Panc1 (cell line): ENCODE measurements at regions of chr4 and their contacts with region 1.

Region 1: DNA sequence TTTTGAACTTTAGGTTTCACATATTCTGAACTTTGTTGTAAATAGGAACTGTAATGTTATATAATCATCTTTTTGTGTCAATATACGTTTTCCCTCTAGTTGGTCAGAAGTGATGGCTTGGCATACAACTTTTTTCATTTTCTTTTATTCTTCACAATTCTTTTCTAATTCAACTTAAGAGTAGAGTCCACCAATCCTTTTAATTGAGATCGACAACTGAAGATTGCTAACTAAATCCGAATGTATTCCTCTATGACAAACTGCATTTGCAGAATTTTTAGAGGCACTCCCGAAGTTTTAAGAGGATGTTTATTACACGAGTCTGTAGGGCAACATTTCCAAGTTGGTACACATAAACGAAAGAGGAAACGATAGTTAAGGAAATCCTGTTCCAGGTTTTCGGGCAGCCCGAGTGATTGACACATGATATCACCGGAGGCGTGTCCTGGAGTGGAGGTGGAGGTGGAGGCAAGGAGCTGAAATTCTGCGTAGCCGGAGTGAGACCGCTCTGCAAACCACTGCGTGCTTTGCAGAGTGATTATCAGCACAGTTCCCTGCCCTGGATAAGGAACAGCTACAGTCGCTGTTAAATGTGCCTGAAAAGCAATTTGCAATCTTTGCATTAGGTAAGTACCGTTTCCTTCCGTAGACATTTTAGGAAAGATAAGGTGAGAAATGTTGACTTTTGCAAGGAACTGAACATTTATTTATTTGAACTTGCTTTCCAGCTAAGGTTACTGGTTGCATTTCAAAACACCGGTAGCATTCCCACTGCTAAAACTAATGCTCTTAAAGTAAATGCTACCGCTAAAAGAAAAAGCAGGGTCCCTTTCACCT is at the start of gene SPRY1:
- DNase-seq: peak; percentile 87
- ATAC-seq: peak; percentile 76
- H3K4me3 ChIP-seq: peak within 1 kb of the TSS; percentile 90 to 94
- H3K27ac ChIP-seq: peak within 1 kb of the TSS; percentile 99
- H3K4me1 ChIP-seq: peaks cover 12% of the 10 kb centered on the region; the same call in 1 of the 2 replicates
- H3K27me3 ChIP-seq: no peaks in the 10 kb centered on the region
- CTCF ChIP-seq: no peak
- total RNA-seq, gene SPRY1: 77.8 TPM

Region 2: GRCh38 chr4:123073650-123074049 is 322.9 kb before region 1 on chr4:
- CTCF ChIA-PET with region 1: no interaction called
- POLR2A ChIA-PET with region 1: no interaction called
- in situ Hi-C with region 1: no loop called
- intact Hi-C with region 1: no loop called
- DNase-seq: no peak
- ATAC-seq: no peak
- H3K4me3 ChIP-seq: no peak overlapping the region
- H3K27ac ChIP-seq: no peak overlapping the region
- H3K4me1 ChIP-seq: no peaks in the 10 kb centered on the region
- H3K27me3 ChIP-seq: no peaks in the 10 kb centered on the region
- CTCF ChIP-seq: no peak

Region 3: DNA sequence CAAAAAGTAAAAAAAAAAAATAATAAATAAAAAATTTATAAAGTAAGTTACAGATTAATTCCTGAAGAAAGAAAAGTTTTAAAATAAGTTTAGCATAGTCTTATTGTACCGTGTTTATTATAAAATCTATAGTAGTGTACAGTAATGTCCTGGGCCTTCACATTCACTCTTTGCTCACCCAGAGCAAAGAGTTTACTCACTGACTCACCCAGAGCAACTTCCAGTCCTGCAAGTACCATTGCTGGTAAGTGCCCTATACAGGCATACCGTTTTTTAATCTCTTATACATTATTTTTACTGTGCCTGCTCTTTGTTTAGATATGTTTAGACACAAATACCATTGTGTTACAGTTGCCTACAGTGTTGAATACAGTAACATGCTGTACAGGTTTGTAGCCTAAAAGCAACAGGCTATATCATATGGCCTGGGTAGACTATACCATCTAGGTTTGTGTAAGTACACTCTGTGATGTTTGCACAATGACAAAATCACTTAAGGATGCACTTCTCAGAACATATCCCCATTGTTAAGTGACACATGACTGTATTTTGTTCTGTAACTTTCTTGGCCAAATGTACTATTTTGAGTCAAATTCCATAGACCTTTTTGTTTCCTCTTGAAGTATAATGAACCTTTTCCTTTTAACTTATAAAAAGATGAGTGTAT is 275.2 kb before region 1 on chr4:
- CTCF ChIA-PET with region 1: no interaction called
- POLR2A ChIA-PET with region 1: no interaction called
- in situ Hi-C with region 1: no loop called
- intact Hi-C with region 1: loop called (anchors 5 kb)
- DNase-seq: peak; percentile 85
- ATAC-seq: peak; percentile 95
- H3K4me3 ChIP-seq: no peak overlapping the region
- H3K27ac ChIP-seq: peak overlapping the region; percentile 90
- H3K4me1 ChIP-seq: peaks cover 26% of the 10 kb centered on the region
- H3K27me3 ChIP-seq: no peaks in the 10 kb centered on the region
- CTCF ChIP-seq: no peak

Region 4: GRCh38 chr4:123505095-123506010 is 108.8 kb after region 1 on chr4:
- CTCF ChIA-PET with region 1: interaction called, 4 read pairs
- POLR2A ChIA-PET with region 1: interaction called, 4 read pairs
- in situ Hi-C with region 1: no loop called
- intact Hi-C with region 1: loop called (anchors 5 kb)
- DNase-seq: no peak
- ATAC-seq: peak; percentile 66
- H3K4me3 ChIP-seq: peak overlapping the region; percentile 37 to 54
- H3K27ac ChIP-seq: peak overlapping the region; percentile 96
- H3K4me1 ChIP-seq: peaks cover 38% of the 10 kb centered on the region
- H3K27me3 ChIP-seq: no peaks in the 10 kb centered on the region
- CTCF ChIP-seq: no peak

Region 5: GRCh38 chr4:123588631-123589241 is 192.2 kb after region 1 on chr4:
- CTCF ChIA-PET with region 1: no interaction called
- POLR2A ChIA-PET with region 1: interaction called, 3 read pairs
- in situ Hi-C with region 1: no loop called
- intact Hi-C with region 1: loop called (anchors 10 kb)
- DNase-seq: no peak
- ATAC-seq: peak; percentile 89
- H3K4me3 ChIP-seq: no peak overlapping the region
- H3K27ac ChIP-seq: peak overlapping the region; percentile 99
- H3K4me1 ChIP-seq: peaks cover 20% of the 10 kb centered on the region
- H3K27me3 ChIP-seq: no peaks in the 10 kb centered on the region
- CTCF ChIP-seq: no peak

Region 6: DNA sequence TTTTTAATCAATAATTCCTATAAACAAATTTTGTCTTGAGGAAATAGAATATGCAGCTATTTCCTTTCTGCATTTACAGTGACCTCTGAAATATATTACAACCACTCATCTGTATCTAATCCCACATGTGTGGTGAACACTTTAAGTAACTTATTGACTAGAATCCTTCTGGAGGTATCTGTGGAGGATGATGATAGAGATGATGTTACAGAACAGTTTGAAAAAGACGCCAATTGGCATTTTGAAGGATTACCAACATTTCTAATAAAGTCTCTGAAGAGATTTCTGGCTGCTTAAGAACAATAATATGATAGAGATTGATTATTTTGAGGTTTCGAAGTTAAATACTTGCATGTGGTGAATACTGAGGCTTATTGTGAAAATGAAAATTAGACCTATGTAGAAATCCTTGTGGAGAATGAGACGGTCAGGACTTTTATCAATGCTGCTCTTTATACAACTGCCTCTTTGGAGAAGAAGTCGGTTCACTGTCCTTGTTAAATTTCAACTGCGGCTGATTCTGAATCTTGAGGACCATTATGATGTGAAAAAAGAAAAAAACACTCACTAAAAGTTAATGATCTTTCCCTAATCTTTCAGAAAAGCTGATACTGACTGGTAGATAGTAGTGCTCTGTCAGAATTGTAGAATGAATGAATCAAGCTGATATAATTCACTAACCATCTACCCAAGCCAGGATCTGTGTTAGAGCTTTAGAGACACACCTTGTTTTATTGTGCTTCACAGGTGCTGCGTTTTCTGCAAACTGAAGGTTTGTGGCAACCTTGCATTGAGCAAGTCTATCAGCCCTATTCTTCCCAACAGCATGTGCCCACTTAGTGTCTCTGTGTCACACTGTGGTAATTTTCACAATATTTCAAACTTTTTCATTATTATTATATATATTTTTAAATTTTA is 204.7 kb after region 1 on chr4:
- CTCF ChIA-PET with region 1: no interaction called
- POLR2A ChIA-PET with region 1: interaction called, 16 read pairs
- in situ Hi-C with region 1: no loop called
- intact Hi-C with region 1: no loop called
- DNase-seq: no peak
- ATAC-seq: no peak
- H3K4me3 ChIP-seq: no peak overlapping the region
- H3K27ac ChIP-seq: peak overlapping the region; percentile 75; the same call in 1 of the 2 replicates
- H3K4me1 ChIP-seq: peaks cover 11% of the 10 kb centered on the region
- H3K27me3 ChIP-seq: no peaks in the 10 kb centered on the region
- CTCF ChIP-seq: no peak

Region 7: GRCh38 chr4:124111922-124112321 is 715.4 kb after region 1 on chr4:
- CTCF ChIA-PET with region 1: no interaction called
- POLR2A ChIA-PET with region 1: no interaction called
- in situ Hi-C with region 1: no loop called
- intact Hi-C with region 1: loop called (anchors 5 kb)
- DNase-seq: peak; percentile 42
- ATAC-seq: peak; percentile 91
- H3K4me3 ChIP-seq: no peak overlapping the region
- H3K27ac ChIP-seq: peak overlapping the region; percentile 82
- H3K4me1 ChIP-seq: peaks cover 17% of the 10 kb centered on the region; the same call in 1 of the 2 replicates
- H3K27me3 ChIP-seq: no peaks in the 10 kb centered on the region
- CTCF ChIP-seq: peak; percentile 65